ENCODE measurements at regions of chr11 and their contacts with region 1.

Region 1: DNA sequence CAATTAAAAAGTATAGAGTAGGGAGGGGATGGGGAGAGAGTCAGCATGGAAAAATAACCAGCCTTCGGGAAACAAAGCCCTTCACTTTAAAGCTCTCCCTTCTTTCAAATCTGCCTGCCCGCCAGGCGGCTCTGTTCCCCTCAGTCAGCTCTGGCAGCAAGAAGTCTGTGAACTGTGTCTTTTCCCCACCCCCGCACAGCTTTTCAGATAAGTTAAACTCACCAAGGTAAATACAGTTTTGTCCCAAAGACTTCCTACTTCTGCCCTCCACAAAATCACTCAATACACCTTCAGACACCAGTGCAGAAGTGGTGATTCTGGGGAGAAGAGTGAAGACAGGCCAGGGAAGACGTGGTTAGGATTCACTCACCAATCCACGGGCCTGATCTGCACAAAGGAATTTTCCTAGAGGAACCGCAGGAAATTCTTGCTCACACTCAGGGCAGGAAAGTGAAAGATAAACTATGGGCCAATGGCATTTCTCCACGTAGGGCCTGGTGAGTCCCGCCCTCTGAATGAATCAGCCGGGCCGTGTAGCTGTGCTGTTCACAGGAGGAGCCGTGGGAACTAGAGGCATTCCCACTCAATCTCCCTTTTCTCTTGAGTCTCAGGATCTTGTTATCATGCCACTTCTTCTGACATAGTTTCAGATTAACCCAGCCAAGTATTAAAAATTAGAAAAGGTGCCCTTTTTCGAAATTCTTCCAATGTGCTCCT is at the start of gene TRIM5:
- DNase-seq: peak; percentile 99
- H3K4me3 ChIP-seq: peak within 1 kb of the TSS; percentile 79
- H3K27ac ChIP-seq: peak within 1 kb of the TSS; percentile 99
- H3K4me1 ChIP-seq: peaks cover 16% of the 10 kb centered on the region
- H3K27me3 ChIP-seq: no peaks in the 10 kb centered on the region
- total RNA-seq, gene TRIM5: 10.7 and 11.9 TPM in 2 replicates

Region 2: GRCh38 chr11:6333112-6333511 is 648.3 kb after region 1 on chr11:
- in situ Hi-C with region 1: loop called (anchors 25 kb)
- DNase-seq: no peak
- H3K4me3 ChIP-seq: no peak overlapping the region
- H3K27ac ChIP-seq: no peak overlapping the region
- H3K4me1 ChIP-seq: peaks cover 9% of the 10 kb centered on the region; the same call in 1 of the 2 replicates
- H3K27me3 ChIP-seq: no peaks in the 10 kb centered on the region

Measured in GM23248 (cell line).